ENCODE measurements at regions of chr7 and their contacts with region 1.

Region 1: DNA sequence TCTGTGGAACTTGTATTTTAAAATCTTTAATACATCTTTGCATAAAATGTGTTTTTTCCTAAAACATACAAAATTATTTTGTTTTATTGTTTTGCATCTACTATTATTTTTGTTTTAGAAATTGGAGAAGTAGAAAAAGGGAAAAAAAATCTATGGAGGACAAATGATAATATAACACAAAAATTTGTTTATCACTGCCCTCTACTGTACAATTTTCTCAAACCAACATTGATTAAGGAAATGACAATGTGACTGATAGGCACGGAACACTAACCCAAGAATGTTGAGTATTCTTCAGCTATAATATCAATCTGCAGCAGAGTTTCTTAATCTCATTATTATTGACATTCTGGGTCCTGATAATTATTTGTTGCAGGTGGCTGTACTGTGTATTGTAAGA is 9.5 kb upstream of the ING3 start:
- DNase-seq: no peak
- ATAC-seq: peak in 1 of 2 donors; percentile 39
- H3K4me3 ChIP-seq: no peak overlapping the region
- H3K27ac ChIP-seq: no peak overlapping the region
- H3K4me1 ChIP-seq: no peaks in the 10 kb centered on the region
- H3K27me3 ChIP-seq: no peaks in the 10 kb centered on the region

Region 2: DNA sequence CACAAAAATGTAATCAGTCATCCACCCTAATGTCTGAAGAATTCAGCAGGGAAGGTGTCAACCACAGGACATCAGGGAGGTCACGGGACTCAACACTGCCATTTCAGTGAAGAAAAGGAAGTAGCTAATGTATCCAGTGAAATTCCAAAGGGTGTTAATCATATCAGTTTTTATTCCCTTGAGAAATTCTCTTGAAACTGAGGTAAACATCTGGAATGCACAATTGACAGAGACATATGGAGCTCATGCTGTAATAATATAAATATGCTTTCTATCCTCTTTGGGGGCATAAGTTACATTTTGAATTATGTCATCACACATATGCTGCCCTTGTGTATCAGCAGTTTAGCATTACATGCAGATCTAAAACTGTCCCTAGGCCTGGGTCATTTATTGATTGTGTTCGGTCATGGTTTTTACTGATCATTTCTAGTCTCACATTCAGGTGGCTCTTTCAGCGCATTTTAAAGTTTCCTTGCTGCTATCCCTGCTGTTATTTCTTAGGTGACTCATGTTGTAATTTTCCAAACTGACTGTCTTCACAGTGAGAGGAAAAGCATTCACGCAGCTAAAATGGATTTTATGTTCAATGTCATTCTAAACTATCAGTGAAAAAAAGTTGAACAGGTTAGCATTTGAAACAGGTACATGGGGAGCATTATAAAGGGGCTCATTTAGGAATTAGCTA is 357.0 kb before region 1 on chr7:
- intact Hi-C with region 1: loop called in 1 of 4 experiments (anchors 5 kb)
- DNase-seq: no peak
- ATAC-seq: no peak
- H3K4me3 ChIP-seq: no peak overlapping the region
- H3K27ac ChIP-seq: no peak overlapping the region
- H3K4me1 ChIP-seq: no peaks in the 10 kb centered on the region
- H3K27me3 ChIP-seq: no peaks in the 10 kb centered on the region

Region 3: DNA sequence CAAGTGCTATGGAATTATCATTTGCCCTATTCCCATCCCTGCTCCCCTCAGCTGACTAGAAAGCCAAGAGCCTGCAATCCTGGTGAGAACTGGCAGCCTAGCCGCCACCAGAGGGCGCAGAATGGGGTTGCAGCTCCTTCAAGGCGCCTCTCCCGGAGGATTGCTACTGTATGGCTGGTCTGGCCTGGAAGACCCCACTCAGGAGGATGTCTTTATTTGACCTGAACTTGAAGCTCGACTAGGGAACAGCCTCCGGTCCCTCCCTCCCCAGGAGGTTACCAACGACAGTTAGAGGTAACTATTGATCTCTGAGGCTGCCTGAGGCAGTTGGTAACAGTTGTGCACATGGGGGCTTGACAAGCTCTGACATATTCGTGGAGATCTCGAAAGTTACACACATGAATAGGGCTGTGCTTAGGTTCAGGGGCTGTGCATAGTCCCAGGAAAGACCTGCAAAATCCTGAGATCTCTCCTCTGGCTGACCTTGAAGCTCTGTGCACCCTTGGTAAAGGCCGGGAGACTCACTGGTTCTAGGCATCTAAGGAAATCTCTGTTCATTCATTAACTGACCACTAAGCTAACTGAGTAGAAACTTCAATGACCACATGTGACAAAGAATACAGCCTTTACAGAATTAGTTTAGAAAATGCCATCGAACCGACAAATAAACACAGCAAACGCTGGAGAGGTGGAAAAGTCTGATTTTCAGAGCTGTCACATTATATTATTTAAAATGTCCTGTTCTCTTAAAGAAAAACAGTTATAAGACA is 148.8 kb before region 1 on chr7:
- intact Hi-C with region 1: loop called in 2 of 4 experiments (anchors 10 kb)
- DNase-seq: peak; percentile 77 to 90 (median 89)
- ATAC-seq: peak; percentile 82 to 91
- H3K4me3 ChIP-seq: no peak overlapping the region
- H3K27ac ChIP-seq: no peak overlapping the region
- H3K4me1 ChIP-seq: peaks cover 2% of the 10 kb centered on the region
- H3K27me3 ChIP-seq: no peaks in the 10 kb centered on the region

Region 4: GRCh38 chr7:120799813-120800475 is 141.1 kb before region 1 on chr7:
- intact Hi-C with region 1: loop called in 3 of 4 experiments (anchors 5 to 10 kb)
- DNase-seq: no peak
- ATAC-seq: no peak
- H3K4me3 ChIP-seq: no peak overlapping the region
- H3K27ac ChIP-seq: no peak overlapping the region
- H3K4me1 ChIP-seq: peaks cover 3% of the 10 kb centered on the region
- H3K27me3 ChIP-seq: no peaks in the 10 kb centered on the region

Region 5: DNA sequence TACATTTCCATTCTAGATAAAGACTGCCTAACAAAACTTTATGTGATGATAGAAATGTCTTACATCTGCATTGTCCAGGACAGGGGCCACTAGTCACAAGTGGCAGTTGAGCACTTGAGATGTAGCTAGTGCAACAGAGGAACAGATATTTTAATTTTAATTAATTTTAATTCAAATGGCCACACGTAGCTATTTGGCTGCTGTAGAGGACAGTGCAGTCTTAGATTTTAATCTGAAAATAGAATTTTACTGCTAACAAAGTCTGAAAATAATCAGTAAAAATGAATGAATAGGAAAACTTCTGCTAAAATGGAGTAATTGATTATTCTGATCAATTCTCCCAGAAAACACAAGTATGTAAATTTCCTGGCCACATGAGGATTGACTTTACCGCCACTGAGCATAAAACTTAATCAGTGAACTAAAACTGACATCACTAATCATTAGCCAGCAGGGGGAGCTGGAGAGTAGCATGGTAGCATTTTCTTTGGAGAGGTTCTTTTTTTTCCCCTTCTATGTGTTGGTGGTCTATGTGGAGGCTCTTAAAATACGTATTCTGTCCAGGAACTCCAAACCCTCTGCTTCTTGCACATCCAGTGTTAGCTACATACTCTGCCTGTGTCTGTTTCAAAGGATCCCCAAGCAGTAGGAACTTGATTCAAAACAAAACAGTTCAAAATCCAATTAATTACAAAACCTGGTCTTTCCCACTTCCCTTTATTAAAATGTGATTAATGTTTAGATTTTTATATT is 135.3 kb before region 1 on chr7:
- intact Hi-C with region 1: loop called in 2 of 4 experiments (anchors 2 to 5 kb)
- DNase-seq: peak in 1 of 3 donors; percentile 27
- ATAC-seq: peak; percentile 51 to 68
- H3K4me3 ChIP-seq: no peak overlapping the region
- H3K27ac ChIP-seq: no peak overlapping the region
- H3K4me1 ChIP-seq: peaks cover 2% of the 10 kb centered on the region
- H3K27me3 ChIP-seq: no peaks in the 10 kb centered on the region

Measured in right cardiac atrium (tissue), 5 donors.